Naive thymus-derived CD4-positive, alpha-beta T cell (primary cell): ENCODE measurements at regions of chr18 and their contacts with region 1.

Region 1: GRCh38 chr18:58529714-58530354 is 99.1 kb downstream of the ALPK2 start:
- DNase-seq: peak; percentile 39 to 71 (median 60)
- ATAC-seq: peak; percentile 87
- H3K4me3 ChIP-seq: no peak overlapping the region
- H3K4me3 Mint-ChIP-seq: no peak overlapping the region
- H3K27ac ChIP-seq: no peak overlapping the region
- H3K27ac Mint-ChIP-seq: no peak overlapping the region
- H3K4me1 ChIP-seq: no peaks in the 10 kb centered on the region
- H3K4me1 Mint-ChIP-seq: peaks cover 0 to 13% (median 6%) of the 10 kb centered on the region in 7 donors
- H3K27me3 ChIP-seq: no peaks in the 10 kb centered on the region
- H3K27me3 Mint-ChIP-seq: peaks cover 0 to 41% (median 0%) of the 10 kb centered on the region in 5 donors

Region 2: GRCh38 chr18:58057291-58057965 is 472.4 kb before region 1 on chr18:
- CTCF ChIA-PET with region 1: no interaction called
- POLR2A ChIA-PET with region 1: no interaction called
- intact Hi-C with region 1: no loop called
- DNase-seq: no peak
- ATAC-seq: no peak
- H3K4me3 ChIP-seq: no peak overlapping the region
- H3K4me3 Mint-ChIP-seq: no peak overlapping the region
- H3K27ac ChIP-seq: no peak overlapping the region
- H3K27ac Mint-ChIP-seq: no peak overlapping the region
- H3K4me1 ChIP-seq: no peaks in the 10 kb centered on the region
- H3K4me1 Mint-ChIP-seq: no peaks in the 10 kb centered on the region
- H3K27me3 ChIP-seq: no peaks in the 10 kb centered on the region
- H3K27me3 Mint-ChIP-seq: peaks cover 0 to 6% (median 0%) of the 10 kb centered on the region in 5 donors

Region 3: GRCh38 chr18:58349650-58350049 is 180.2 kb before region 1 on chr18:
- CTCF ChIA-PET with region 1: no interaction called
- POLR2A ChIA-PET with region 1: no interaction called
- intact Hi-C with region 1: no loop called
- DNase-seq: no peak
- ATAC-seq: no peak
- H3K4me3 ChIP-seq: no peak overlapping the region
- H3K4me3 Mint-ChIP-seq: no peak overlapping the region
- H3K27ac ChIP-seq: no peak overlapping the region
- H3K27ac Mint-ChIP-seq: no peak overlapping the region
- H3K4me1 ChIP-seq: no peaks in the 10 kb centered on the region
- H3K4me1 Mint-ChIP-seq: no peaks in the 10 kb centered on the region
- H3K27me3 ChIP-seq: no peaks in the 10 kb centered on the region
- H3K27me3 Mint-ChIP-seq: peaks cover 0 to 4% (median 0%) of the 10 kb centered on the region in 5 donors

Region 4: DNA sequence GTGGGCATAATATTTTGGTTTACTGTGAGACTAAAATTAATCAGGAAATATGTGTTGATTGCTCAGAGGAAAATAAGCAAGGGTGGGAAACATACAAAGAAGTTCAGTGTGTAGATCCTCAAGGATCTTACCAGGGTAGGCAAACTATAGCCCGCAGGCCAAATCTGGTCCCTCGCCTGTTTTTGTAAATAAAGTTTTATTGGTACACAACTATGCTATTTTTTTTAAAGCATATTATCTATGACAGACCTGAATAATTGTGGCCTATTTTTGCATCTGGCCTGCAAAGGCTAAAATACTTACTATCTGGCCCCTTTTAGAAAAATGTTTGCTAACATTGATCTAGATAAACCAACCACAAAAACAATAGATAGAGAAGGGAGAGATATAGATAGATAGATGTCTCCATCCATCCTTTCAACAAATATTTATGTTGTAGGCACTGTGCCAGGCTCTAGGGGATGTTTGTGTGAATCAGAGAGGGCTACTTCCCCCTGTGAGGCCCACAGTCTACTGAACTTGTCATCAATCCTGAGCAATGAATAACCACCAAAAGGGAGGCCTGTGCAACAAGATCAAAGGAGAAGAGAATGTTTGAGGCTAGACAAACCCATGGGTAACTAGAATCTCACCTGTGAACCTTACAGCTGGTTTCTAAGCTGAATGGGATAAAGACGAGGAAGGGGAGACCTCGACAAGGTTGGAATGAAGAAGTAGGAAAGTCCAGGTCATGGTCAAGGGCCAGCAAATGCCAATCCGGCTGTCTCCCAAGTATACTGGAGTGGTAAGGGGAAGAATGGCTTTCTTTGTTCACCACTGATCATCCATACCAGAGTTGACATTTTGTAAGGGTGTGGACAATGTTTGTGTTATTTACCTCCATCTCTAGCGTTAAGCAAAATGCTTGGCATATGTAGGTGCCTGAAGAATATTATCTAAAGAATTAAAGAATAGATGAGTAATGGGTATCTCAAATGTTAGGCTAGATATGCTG is 75.5 kb after region 1 on chr18:
- CTCF ChIA-PET with region 1: no interaction called
- POLR2A ChIA-PET with region 1: no interaction called
- intact Hi-C with region 1: loop called in 1 of 2 experiments (anchors 5 kb)
- DNase-seq: peak in 6 of 9 donors; percentile 12 to 54 (median 35)
- ATAC-seq: peak; percentile 74
- H3K4me3 ChIP-seq: no peak overlapping the region
- H3K4me3 Mint-ChIP-seq: peak overlapping the region in 9 of 10 donors; percentile 14 to 76 (median 46)
- H3K27ac ChIP-seq: no peak overlapping the region
- H3K27ac Mint-ChIP-seq: peak overlapping the region in 8 of 9 donors; percentile 1 to 79 (median 50)
- H3K4me1 ChIP-seq: peaks cover 0 to 48% of the 10 kb centered on the region in 2 donors
- H3K4me1 Mint-ChIP-seq: peaks cover 25 to 62% (median 51%) of the 10 kb centered on the region in 7 donors
- H3K27me3 ChIP-seq: no peaks in the 10 kb centered on the region
- H3K27me3 Mint-ChIP-seq: peaks cover 0 to 8% (median 0%) of the 10 kb centered on the region in 5 donors

Region 5: DNA sequence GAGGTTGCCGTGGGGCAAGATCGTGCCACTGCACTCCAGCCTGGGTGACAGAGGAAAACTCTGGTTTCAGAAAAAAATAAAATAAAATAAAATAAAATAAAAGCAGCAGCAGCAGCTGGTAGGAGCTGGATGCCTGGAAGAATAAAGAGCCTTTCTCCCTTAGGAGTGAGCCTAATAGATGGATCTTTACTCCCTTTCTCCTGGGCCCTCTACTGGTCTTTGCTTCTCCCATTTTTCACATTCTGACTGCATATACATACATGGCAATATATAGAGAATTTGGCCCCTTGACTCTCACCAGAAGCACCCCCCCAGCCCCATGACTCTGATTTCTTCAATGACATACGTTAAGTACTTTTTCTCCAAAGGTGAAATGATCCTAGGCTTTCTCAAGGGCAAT is 131.6 kb after region 1 on chr18:
- CTCF ChIA-PET with region 1: interaction called, 6 read pairs
- POLR2A ChIA-PET with region 1: interaction called, 4 read pairs
- intact Hi-C with region 1: loop called in 1 of 2 experiments (anchors 1 kb)
- DNase-seq: no peak
- ATAC-seq: no peak
- H3K4me3 ChIP-seq: no peak overlapping the region
- H3K4me3 Mint-ChIP-seq: no peak overlapping the region
- H3K27ac ChIP-seq: no peak overlapping the region
- H3K27ac Mint-ChIP-seq: peak overlapping the region in 1 of 9 donors; percentile 22
- H3K4me1 ChIP-seq: peaks cover 31 to 33% of the 10 kb centered on the region in 2 donors
- H3K4me1 Mint-ChIP-seq: peaks cover 38 to 68% (median 62%) of the 10 kb centered on the region in 7 donors
- H3K27me3 ChIP-seq: no peaks in the 10 kb centered on the region
- H3K27me3 Mint-ChIP-seq: no peaks in the 10 kb centered on the region

Region 6: GRCh38 chr18:58716060-58716756 is 186.4 kb after region 1 on chr18:
- CTCF ChIA-PET with region 1: interaction called, 4 read pairs
- POLR2A ChIA-PET with region 1: no interaction called
- intact Hi-C with region 1: loop called in 1 of 2 experiments (anchors 1 kb)
- DNase-seq: peak in 7 of 9 donors; percentile 19 to 59 (median 44)
- ATAC-seq: peak; percentile 86
- H3K4me3 ChIP-seq: no peak overlapping the region
- H3K4me3 Mint-ChIP-seq: peak overlapping the region; percentile 63 to 92 (median 80)
- H3K27ac ChIP-seq: peak overlapping the region; percentile 44
- H3K27ac Mint-ChIP-seq: peak overlapping the region; percentile 77 to 94 (median 87)
- H3K4me1 ChIP-seq: peaks cover 25 to 32% of the 10 kb centered on the region in 2 donors
- H3K4me1 Mint-ChIP-seq: peaks cover 38 to 92% (median 76%) of the 10 kb centered on the region in 7 donors
- H3K27me3 ChIP-seq: no peaks in the 10 kb centered on the region
- H3K27me3 Mint-ChIP-seq: no peaks in the 10 kb centered on the region

Region 7: GRCh38 chr18:58788971-58789875 is 259.4 kb after region 1 on chr18:
- CTCF ChIA-PET with region 1: no interaction called
- POLR2A ChIA-PET with region 1: no interaction called
- intact Hi-C with region 1: no loop called
- DNase-seq: no peak
- ATAC-seq: no peak
- H3K4me3 ChIP-seq: no peak overlapping the region
- H3K4me3 Mint-ChIP-seq: no peak overlapping the region
- H3K27ac ChIP-seq: no peak overlapping the region
- H3K27ac Mint-ChIP-seq: no peak overlapping the region
- H3K4me1 ChIP-seq: no peaks in the 10 kb centered on the region
- H3K4me1 Mint-ChIP-seq: no peaks in the 10 kb centered on the region
- H3K27me3 ChIP-seq: no peaks in the 10 kb centered on the region
- H3K27me3 Mint-ChIP-seq: peaks cover 5 to 30% (median 21%) of the 10 kb centered on the region in 5 donors

Region 8: GRCh38 chr18:58856881-58857280 is 327.0 kb after region 1 on chr18:
- CTCF ChIA-PET with region 1: no interaction called
- POLR2A ChIA-PET with region 1: no interaction called
- intact Hi-C with region 1: no loop called
- DNase-seq: no peak
- ATAC-seq: no peak
- H3K4me3 ChIP-seq: no peak overlapping the region
- H3K4me3 Mint-ChIP-seq: no peak overlapping the region
- H3K27ac ChIP-seq: no peak overlapping the region
- H3K27ac Mint-ChIP-seq: no peak overlapping the region
- H3K4me1 ChIP-seq: no peaks in the 10 kb centered on the region
- H3K4me1 Mint-ChIP-seq: peaks cover 0 to 4% (median 0%) of the 10 kb centered on the region in 7 donors
- H3K27me3 ChIP-seq: no peaks in the 10 kb centered on the region
- H3K27me3 Mint-ChIP-seq: peaks cover 26 to 46% (median 35%) of the 10 kb centered on the region in 5 donors

Region 9: DNA sequence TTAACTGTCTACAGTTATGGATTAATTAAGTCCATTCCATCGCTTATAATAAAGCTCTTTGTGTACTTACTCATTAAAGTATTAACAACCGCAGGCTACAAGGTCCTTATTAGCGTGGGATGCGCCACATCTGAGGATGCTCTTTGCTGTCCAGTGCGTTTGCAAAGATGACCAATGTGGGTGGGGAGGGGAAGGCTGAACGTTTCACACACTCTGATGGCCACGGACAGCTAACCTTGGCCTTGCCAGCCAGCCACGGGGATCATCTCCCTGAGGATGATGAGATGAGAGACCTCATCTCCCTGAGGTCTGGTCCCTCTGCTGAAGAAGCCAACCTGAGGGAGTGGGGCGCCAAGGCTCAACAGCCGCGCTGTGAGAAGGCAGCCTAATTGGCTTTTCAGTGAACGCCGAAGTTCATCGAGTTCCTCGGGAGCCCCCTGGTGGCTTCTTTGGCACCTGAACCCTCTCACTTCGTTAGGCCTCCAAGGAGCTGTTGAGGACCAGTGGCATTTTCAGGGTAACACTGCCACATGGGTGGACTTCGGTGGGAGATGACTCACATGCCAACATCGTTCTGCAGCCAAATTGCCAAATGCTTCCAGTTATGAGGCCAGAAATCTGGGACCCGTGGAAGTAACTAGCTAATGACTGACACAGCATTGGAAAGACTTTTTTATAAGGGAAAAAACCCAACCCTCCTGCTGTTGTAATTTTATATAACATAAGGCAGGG is 540.5 kb after region 1 on chr18:
- CTCF ChIA-PET with region 1: interaction called, 3 read pairs
- POLR2A ChIA-PET with region 1: no interaction called
- intact Hi-C with region 1: loop called (anchors 2 to 10 kb)
- DNase-seq: peak; percentile 35 to 75 (median 65)
- ATAC-seq: peak; percentile 85
- H3K4me3 ChIP-seq: no peak overlapping the region
- H3K4me3 Mint-ChIP-seq: no peak overlapping the region
- H3K27ac ChIP-seq: no peak overlapping the region
- H3K27ac Mint-ChIP-seq: no peak overlapping the region
- H3K4me1 ChIP-seq: no peaks in the 10 kb centered on the region
- H3K4me1 Mint-ChIP-seq: no peaks in the 10 kb centered on the region
- H3K27me3 ChIP-seq: no peaks in the 10 kb centered on the region
- H3K27me3 Mint-ChIP-seq: peaks cover 0 to 8% (median 5%) of the 10 kb centered on the region in 5 donors